Left cardiac atrium (tissue), 4 donors: ENCODE measurements at regions of chr1 and their contacts with region 1.

Region 1: DNA sequence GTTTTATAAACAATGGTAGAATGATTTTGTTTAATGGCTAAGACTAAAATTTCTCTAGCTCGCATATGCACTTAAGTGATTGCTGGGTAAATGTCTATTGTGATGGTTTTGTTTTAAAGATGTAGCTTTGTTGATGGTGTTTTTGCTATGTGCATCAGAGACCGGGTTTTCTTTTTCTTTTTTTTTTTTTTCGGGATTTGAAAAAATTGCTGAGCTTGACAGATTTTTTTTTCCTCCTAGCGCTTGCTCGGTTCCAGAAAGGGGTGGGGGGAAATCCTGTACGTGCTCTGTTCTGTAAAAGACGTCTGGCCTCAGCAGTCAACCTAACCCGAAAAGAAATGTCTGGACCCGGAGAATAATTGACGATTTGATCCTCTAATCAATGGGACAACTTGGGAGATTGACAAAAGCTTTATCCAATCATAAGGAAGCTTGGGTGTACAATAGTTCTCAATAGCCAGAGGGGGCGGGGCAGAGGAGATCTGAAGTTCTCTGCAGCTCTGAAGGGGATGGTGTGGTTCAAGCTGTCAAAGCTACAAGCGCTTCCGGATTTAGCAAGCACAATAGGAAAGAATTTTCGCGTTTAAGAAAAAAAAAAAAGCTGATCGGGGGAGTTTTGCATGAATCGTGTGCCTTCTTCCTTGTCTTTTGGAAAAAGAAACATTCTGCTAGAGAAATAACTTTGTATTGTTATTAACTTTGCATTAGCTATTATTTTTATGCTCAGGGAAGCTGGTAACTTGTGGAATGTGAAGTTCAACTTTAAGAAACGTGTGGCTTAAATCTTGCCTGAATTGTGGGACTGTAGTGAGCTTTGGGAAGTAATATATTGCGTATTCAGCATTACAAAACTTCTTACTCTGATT is 4.5 kb upstream of the NFIA start:
- DNase-seq: peak; percentile 96
- ATAC-seq: peak; percentile 76 to 83

Region 2: DNA sequence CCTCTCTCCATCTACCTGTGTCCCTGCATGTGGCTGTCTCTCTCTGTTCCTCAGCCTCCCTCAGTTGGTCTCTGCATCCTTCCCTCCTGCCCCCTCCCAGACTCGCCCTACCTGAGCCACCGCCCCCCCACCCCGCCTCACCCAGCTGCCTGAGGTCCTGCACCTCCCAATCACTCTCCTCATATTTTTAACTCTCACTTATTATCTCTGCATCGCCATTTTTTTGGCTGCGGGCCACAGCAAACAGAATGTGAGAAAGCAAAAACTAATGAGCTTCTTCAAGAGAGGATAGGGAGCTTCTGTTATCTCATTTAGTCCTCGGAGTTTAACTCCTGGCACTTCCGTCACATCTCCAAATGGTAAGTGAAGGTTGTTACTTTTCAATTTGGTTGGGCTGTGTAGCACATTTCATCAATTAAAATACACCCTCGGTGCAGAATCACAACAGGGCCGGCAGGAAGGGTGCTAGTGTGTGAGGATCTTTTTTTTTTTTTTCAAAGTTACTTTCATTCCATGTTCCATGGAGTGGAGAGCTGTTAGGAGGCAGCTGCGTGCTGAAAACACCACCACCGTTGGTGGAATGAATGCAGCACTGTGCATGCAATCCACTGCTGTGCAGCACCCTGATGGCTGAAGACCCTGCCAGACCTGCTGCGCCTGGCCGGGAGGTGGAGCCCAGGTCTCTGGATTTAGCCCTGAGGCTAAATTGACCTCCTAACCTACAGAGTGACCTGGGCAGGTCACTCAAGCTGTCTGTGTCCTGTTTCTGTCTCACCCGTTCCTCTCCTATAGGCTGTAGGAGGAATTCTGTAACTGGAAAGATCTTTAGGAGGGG is 152.7 kb before region 1 on chr1:
- intact Hi-C with region 1: no loop called
- DNase-seq: no peak
- ATAC-seq: peak; percentile 34 to 38

Region 3: DNA sequence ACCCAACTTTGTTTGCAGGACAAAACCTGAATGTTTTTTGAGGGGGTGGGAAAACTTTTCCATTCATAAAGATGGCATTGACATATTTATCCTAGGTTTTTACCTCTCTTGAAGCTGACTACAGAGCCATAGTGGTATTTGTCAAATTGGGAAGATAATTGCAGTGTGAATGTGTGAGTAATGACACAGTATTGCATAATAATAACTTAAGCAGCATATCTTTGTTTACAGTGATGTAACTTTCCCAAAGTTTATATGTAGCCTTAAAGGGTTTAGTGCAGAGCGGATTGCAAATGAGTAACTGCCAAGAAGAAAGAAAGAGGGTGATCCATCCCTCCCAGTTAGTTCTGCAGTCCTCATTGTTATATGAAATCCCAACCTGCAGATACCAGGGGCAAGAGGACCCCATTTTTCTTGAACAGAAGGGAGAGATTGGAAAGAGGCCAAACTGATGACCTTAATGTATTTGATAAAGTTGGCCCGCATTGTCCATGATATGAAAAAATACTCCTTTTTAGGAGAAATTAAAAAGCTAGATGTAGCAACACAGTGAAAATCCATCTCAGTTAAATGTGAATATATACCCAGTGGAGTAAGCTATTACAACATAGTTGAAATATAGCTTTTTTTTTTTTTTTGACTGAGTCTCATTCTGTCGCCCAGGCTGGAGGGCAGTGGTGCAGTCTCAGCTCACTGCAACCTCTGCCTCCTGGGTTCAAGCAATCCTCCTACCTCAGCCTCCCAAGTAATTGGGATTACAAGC is 19.2 kb before region 1 on chr1:
- intact Hi-C with region 1: loop called in 1 of 2 experiments (anchors 2 kb)
- DNase-seq: no peak
- ATAC-seq: peak in 1 of 2 donors; percentile 33

Region 4: GRCh38 chr1:61184040-61184713 is 106.3 kb after region 1 on chr1:
- intact Hi-C with region 1: loop called in 1 of 2 experiments (anchors 5 kb)
- DNase-seq: peak; percentile 95
- ATAC-seq: peak; percentile 95 to 96

Region 5: GRCh38 chr1:61244114-61244513 is 166.2 kb after region 1 on chr1:
- intact Hi-C with region 1: loop called in 1 of 2 experiments (anchors 10 kb)
- DNase-seq: no peak
- ATAC-seq: peak in 1 of 2 donors; percentile 70

Region 6: DNA sequence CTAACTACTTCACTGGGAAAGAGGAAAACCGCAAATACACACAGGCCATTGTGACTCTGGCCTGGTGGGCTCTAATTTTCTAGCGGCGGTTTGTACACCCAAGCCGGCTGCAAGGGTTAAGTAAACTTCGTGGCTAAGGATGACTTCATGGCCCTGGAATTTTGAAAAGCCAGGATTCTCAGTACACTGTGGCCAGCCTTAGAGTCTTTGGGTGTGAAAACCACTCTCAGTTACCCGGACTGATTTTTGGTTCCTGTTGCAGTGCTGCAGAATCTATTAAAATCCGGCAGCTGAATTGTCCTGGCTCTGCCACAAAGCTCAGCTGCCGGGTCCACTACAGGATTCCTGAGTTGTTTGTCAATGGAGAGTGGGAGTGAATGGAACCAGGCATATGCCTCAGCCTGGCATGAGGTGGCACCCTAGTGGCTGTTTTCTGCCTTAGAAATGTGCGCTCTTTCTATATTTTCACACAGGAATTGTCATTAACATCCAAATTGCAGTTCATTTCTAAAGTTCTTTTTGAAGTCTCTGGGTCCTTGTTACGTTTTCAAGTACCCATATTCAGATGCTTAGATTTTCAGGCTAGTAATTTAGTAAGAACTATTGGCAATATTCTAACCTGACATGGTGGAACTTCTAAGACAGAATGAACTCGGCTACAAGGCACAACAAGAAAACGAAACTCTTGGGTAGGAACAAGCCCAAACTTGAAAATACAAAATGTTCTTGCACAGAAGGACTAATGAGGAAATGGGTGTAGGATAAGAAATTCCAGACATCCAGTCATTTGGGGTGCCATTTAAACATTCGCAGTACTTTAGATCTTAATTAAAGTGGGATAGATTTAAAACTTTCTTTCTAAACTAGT is 260.3 kb after region 1 on chr1:
- intact Hi-C with region 1: loop called in 1 of 2 experiments (anchors 5 kb)
- DNase-seq: peak; percentile 78
- ATAC-seq: peak; percentile 91 to 92